ENCODE measurements at regions of chr19 and their contacts with region 1.

Region 1: GRCh38 chr19:7488736-7489353 is at the start of gene PEX11G:
- DNase-seq: peak; percentile 95
- H3K4me3 ChIP-seq: peak within 1 kb of the TSS; percentile 42 to 72 (median 63)
- H3K27ac ChIP-seq: peak within 1 kb of the TSS; percentile 82 to 88 (median 85)
- H3K4me1 ChIP-seq: peaks cover 0 to 17% (median 10%) of the 10 kb centered on the region in 4 donors
- H3K27me3 ChIP-seq: no peaks in the 10 kb centered on the region
- CTCF ChIP-seq: no peak
- EP300 ChIP-seq: no peak
- POLR2A ChIP-seq: peak; percentile 37 to 59
- total RNA-seq, gene PEX11G: 2.3 to 4.8 (median 3.6) TPM in 3 of 4 donors, not detected in the other

Region 2: GRCh38 chr19:7063339-7063738 is 425.5 kb before region 1 on chr19:
- intact Hi-C with region 1: no loop called
- DNase-seq: no peak
- H3K4me3 ChIP-seq: no peak overlapping the region
- H3K27ac ChIP-seq: no peak overlapping the region
- H3K4me1 ChIP-seq: no peaks in the 10 kb centered on the region
- H3K27me3 ChIP-seq: no peaks in the 10 kb centered on the region
- CTCF ChIP-seq: no peak
- EP300 ChIP-seq: no peak
- POLR2A ChIP-seq: no peak

Region 3: DNA sequence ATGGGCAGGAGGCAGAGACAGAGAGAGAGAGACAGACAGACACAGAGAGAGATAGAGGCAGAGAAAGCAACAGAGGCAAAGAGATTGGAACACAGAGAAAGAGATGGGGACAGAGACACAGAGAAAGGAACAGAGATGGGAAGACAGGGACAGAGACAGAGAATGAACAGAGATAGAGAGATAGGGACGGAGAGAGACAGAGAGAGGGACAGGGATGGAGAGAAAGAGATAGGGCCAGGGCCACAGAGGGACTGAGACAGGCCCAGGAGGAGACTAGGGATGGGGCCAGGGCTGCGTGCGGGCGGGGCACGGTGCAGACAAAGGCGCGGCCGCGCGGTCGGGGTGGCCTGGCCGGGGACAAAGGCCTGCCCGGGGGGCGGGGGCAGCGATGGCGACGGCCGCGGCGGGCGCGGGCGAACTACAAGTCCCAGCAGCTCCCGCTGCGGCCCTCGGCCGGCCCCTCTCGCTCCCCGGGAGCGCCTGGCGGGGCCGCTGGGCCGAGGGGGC is 26.9 kb after region 1 on chr19 and contains the start of gene ZNF358:
- intact Hi-C with region 1: loop called (anchors 2 kb)
- DNase-seq: peak; percentile 88
- H3K4me3 ChIP-seq: peak within 1 kb of the TSS; percentile 84 to 91 (median 88)
- H3K27ac ChIP-seq: peak within 1 kb of the TSS; percentile 85 to 96 (median 94)
- H3K4me1 ChIP-seq: peaks cover 0 to 31% (median 28%) of the 10 kb centered on the region in 4 donors
- H3K27me3 ChIP-seq: no peaks in the 10 kb centered on the region
- CTCF ChIP-seq: no peak
- EP300 ChIP-seq: no peak
- POLR2A ChIP-seq: no peak
- total RNA-seq, gene ZNF358: 64.5 to 120 (median 69.6) TPM

Region 4: DNA sequence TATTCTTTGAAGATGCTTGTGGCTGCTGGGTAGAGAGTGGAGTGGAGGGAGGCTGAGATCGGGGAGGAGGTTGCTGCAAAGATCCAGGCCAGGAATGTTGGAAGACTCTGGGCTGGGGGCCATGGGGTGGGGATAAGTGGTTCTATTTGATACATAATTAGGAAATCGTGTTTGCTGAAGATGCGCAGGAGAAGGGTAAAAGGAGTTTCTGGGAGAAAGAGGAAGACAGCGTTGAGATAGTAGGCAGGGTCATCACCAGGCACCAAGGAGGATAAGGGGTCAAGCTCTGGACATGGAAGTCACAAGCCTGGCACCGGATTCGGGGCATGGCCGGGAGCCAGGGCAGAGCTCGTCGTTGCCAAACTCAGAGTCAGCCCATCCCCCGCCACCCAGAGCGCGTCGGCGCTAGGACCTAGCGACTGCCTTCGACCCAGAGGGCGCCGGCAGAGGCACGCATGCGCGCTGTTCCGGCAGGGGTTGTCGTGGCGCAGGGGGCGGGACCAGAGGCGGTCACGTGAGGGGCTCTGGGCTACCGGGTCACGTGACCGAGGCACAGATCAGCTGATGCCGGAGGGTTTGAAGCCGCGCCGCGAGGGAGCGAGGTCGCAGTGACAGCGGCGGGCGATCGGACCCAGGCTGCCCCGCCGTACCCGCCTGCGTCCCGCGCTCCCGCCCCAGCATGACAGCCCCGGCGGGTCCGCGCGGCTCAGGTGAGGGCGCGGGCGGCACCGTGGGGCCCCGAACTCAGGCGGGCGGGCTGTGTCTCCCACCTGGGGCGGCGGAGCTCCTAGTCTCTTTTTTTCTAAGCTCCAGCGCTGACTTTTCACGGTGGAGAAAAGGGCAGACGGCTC is 33.5 kb after region 1 on chr19 and contains the start of gene MCOLN1:
- intact Hi-C with region 1: loop called (anchors 2 kb)
- DNase-seq: peak; percentile 100
- H3K4me3 ChIP-seq: peak within 1 kb of the TSS; percentile 67 to 96 (median 84)
- H3K27ac ChIP-seq: peak within 1 kb of the TSS; percentile 58 to 81 (median 76)
- H3K4me1 ChIP-seq: peaks cover 0 to 33% (median 27%) of the 10 kb centered on the region in 4 donors
- H3K27me3 ChIP-seq: no peaks in the 10 kb centered on the region
- CTCF ChIP-seq: no peak
- EP300 ChIP-seq: peak in 1 of 4 donors; percentile 66
- POLR2A ChIP-seq: no peak
- total RNA-seq, gene MCOLN1: 15.5 to 21.3 (median 17.1) TPM

Region 5: GRCh38 chr19:7535035-7535992 is 46.5 kb after region 1 on chr19 and contains the start of gene PNPLA6:
- intact Hi-C with region 1: loop called (anchors 5 kb)
- DNase-seq: peak; percentile 98
- H3K4me3 ChIP-seq: peak within 1 kb of the TSS; percentile 72 to 89 (median 84)
- H3K27ac ChIP-seq: peak within 1 kb of the TSS; percentile 87 to 97 (median 96)
- H3K4me1 ChIP-seq: peaks cover 0 to 27% (median 16%) of the 10 kb centered on the region in 4 donors
- H3K27me3 ChIP-seq: no peaks in the 10 kb centered on the region
- CTCF ChIP-seq: no peak
- EP300 ChIP-seq: no peak
- POLR2A ChIP-seq: peak; percentile 46 to 69
- total RNA-seq, gene PNPLA6: 35.2 to 77.0 (median 44.1) TPM

Region 6: DNA sequence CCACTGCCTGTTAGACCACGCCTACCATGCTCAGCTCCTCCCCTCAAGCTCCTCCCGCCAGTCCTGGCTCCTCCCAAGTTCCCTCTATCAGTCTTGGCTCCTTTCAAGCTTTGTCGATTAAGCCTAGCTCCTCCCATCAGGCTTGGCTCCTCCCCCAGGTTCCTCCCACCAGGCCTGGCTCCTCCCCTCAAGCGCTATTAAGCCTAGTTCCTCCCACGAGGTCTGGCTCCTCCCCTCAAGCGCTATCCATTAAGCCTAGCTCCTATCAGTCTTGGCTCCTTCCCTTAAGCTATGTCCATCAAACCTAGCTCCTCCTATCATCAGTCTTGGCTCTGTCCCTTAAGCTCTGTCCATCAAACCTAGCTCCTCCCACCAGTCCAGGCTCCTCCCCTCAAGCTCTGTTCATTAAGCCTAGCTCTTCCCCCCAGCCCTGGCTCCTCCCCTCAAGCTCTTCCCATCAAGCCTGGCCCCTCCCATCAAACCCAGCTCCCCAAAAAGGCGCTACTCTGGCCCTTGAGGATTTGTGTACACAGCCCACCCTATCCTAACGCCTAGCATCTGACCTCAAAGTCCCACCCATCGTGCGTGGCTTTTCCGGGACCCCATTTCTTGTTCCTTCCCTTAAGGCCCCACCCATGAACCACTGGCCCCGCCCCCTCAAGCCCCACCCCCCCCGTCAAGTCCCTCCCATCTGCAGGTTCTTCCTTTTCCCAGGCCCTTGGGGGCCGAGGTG is 116.8 kb after region 1 on chr19:
- intact Hi-C with region 1: no loop called
- DNase-seq: no peak
- H3K4me3 ChIP-seq: no peak overlapping the region
- H3K27ac ChIP-seq: no peak overlapping the region
- H3K4me1 ChIP-seq: no peaks in the 10 kb centered on the region
- H3K27me3 ChIP-seq: peaks cover 0 to 49% (median 18%) of the 10 kb centered on the region in 3 donors
- CTCF ChIP-seq: no peak
- EP300 ChIP-seq: no peak
- POLR2A ChIP-seq: no peak

Measured in sigmoid colon (tissue), 7 donors.